ENCODE measurements at regions of chr2 and their contacts with region 1.

Region 1: GRCh38 chr2:15591692-15592463 is at the start of gene DDX1:
- DNase-seq: peak; percentile 71 to 92 (median 84)
- ATAC-seq: peak; percentile 96
- H3K4me3 ChIP-seq: peak within 1 kb of the TSS; percentile 92 to 95
- H3K4me3 Mint-ChIP-seq: peak within 1 kb of the TSS; percentile 95
- H3K27ac ChIP-seq: peak within 1 kb of the TSS; percentile 77 to 87
- H3K27ac Mint-ChIP-seq: peak within 1 kb of the TSS; percentile 91
- H3K4me1 ChIP-seq: peaks cover 20% of the 10 kb centered on the region
- H3K4me1 Mint-ChIP-seq: peaks cover 47% of the 10 kb centered on the region
- H3K27me3 ChIP-seq: no peaks in the 10 kb centered on the region
- H3K27me3 Mint-ChIP-seq: no peaks in the 10 kb centered on the region
- CTCF ChIP-seq: no peak
- total RNA-seq, gene DDX1: 49.7 to 58.0 TPM

Region 2: DNA sequence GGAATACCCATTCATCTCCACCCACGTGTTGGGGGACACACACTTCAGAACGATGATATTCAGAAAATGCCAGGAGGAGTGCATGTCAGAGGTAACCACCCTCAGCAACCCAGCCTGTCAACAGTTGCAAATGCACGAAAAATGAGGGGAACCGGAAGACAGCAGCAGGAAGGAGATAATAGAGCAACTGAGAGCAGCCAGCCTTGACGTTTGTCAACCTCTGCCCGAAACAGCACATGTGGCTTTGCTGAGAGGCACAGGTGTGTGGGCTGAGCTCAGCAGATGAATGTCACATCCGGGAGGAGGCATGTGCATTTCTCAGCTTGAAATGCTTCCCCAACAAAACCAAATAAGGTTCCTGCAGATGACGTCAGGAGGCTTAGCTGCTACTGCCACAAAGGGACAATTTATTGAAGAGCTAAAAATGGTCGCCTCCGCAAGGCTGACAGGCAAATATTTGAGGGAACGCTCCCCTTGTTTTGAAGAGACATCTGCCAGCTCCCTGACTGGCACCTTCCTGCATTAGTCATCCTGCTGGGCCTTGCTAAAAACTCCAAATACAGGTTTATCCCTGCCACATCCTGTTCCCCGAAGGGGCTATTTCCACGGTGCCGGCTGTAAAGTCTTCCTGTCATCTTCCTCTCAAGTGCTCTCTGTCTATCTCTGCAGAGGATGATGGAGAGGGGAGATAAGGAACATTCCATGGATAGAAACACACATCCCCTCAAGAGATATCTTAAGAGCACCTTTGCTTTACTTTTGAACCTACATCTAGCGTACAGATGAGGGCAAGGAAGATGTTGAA is 449.6 kb before region 1 on chr2:
- CTCF ChIA-PET with region 1: no interaction called
- POLR2A ChIA-PET with region 1: interaction called, 3 read pairs
- intact Hi-C with region 1: loop called (anchors 5 to 10 kb)
- DNase-seq: peak; percentile 34 to 87 (median 58)
- ATAC-seq: peak; percentile 98
- H3K4me3 ChIP-seq: peak overlapping the region in 1 of 2 experiments; percentile 2
- H3K4me3 Mint-ChIP-seq: peak overlapping the region; percentile 19
- H3K27ac ChIP-seq: peak overlapping the region; percentile 14 to 55
- H3K27ac Mint-ChIP-seq: peak overlapping the region; percentile 86
- H3K4me1 ChIP-seq: peaks cover 17% of the 10 kb centered on the region
- H3K4me1 Mint-ChIP-seq: peaks cover 20% of the 10 kb centered on the region
- H3K27me3 ChIP-seq: no peaks in the 10 kb centered on the region
- H3K27me3 Mint-ChIP-seq: no peaks in the 10 kb centered on the region
- CTCF ChIP-seq: no peak

Region 3: GRCh38 chr2:15560988-15561573 is 30.8 kb before region 1 on chr2 and contains the start of gene NBAS:
- CTCF ChIA-PET with region 1: no interaction called
- POLR2A ChIA-PET with region 1: interaction called, 8 read pairs
- intact Hi-C with region 1: loop called (anchors 1 kb)
- DNase-seq: peak; percentile 61 to 87 (median 79)
- ATAC-seq: peak; percentile 88
- H3K4me3 ChIP-seq: peak within 1 kb of the TSS; percentile 53 to 85
- H3K4me3 Mint-ChIP-seq: peak within 1 kb of the TSS; percentile 100
- H3K27ac ChIP-seq: peak within 1 kb of the TSS; percentile 47 to 70
- H3K27ac Mint-ChIP-seq: peak within 1 kb of the TSS; percentile 98
- H3K4me1 ChIP-seq: peaks cover 9% of the 10 kb centered on the region
- H3K4me1 Mint-ChIP-seq: peaks cover 40% of the 10 kb centered on the region
- H3K27me3 ChIP-seq: no peaks in the 10 kb centered on the region
- H3K27me3 Mint-ChIP-seq: peaks cover 4% of the 10 kb centered on the region
- CTCF ChIP-seq: no peak
- total RNA-seq, gene NBAS: 16.9 to 17.6 TPM

Region 4: DNA sequence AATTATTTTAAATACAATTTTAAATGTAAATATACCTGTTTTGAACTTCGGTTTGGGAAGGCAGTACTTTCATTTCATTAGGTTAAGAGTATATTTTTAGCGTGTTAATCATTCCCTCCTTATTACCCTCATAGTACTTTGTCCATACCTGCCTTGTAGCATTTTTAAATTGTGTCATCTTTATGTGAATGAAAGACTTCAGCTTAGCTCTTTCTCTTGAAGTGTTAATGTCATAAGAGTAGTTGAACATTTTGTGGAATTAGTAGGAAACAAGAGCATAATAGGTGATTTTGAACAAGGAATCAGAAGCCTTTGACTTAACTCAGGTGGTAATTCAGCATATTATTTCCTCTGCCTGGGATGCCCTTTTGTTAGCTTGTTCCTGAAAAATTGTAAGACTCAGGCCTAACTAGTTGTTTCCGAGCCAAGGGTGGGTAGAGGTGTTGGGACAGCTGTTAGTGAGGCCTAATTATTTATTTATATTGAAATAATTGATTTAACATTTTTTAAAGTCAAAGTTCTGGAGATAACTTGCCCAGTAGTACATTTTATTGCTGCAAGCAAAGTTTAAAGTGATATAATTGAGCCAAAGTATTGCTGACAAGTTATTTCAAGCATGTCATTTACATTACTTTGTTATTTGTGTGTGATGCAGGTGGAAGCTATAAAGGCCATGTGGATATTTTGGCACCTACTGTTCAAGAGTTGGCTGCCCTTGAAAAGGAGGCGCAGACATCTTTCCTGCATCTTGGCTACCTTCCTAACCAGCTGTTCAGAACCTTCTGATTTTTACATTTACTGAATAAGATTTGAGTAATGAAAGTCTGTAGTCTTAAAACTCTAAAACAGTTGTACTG is 38.5 kb after region 1 on chr2:
- CTCF ChIA-PET with region 1: no interaction called
- POLR2A ChIA-PET with region 1: no interaction called
- intact Hi-C with region 1: no loop called
- DNase-seq: no peak
- ATAC-seq: no peak
- H3K4me3 ChIP-seq: no peak overlapping the region
- H3K4me3 Mint-ChIP-seq: no peak overlapping the region
- H3K27ac ChIP-seq: no peak overlapping the region
- H3K27ac Mint-ChIP-seq: no peak overlapping the region
- H3K4me1 ChIP-seq: no peaks in the 10 kb centered on the region
- H3K4me1 Mint-ChIP-seq: no peaks in the 10 kb centered on the region
- H3K27me3 ChIP-seq: no peaks in the 10 kb centered on the region
- H3K27me3 Mint-ChIP-seq: no peaks in the 10 kb centered on the region
- CTCF ChIP-seq: no peak